ENCODE measurements at regions of chr2 and their contacts with region 1.

Region 1: DNA sequence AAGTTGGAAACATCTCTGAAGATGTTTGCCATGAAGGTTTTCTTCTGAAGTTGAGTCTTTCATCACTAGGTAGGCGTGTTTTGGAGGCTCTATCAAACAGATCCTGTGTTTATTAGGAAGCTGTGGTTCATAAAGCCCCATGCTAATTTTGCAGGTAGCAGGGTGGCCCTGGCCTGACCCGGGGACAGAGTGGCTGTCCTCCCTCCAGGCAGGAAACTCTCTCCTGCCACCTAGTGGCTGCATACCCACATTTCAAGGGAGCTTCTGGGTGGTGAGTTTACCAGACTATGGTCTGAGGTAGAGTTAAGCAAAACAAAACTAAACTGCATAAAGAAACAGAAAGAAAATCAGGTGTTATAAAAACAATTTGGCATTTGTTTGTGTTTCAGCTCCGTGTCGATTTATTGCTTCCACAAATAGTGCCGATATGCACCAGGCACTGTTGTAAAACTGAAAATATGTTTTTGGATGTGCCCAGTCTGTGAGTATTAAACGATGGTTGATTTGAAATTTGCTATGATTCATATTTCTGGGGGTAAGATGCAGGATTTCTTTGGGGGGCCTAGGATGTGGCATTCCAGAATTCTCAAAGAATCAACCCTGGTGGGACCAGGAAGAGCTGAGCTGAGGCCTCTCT is 26.0 kb upstream of the IL37 start:
- DNase-seq: peak; percentile 80
- CTCF ChIP-seq: peak; percentile 84

Region 2: DNA sequence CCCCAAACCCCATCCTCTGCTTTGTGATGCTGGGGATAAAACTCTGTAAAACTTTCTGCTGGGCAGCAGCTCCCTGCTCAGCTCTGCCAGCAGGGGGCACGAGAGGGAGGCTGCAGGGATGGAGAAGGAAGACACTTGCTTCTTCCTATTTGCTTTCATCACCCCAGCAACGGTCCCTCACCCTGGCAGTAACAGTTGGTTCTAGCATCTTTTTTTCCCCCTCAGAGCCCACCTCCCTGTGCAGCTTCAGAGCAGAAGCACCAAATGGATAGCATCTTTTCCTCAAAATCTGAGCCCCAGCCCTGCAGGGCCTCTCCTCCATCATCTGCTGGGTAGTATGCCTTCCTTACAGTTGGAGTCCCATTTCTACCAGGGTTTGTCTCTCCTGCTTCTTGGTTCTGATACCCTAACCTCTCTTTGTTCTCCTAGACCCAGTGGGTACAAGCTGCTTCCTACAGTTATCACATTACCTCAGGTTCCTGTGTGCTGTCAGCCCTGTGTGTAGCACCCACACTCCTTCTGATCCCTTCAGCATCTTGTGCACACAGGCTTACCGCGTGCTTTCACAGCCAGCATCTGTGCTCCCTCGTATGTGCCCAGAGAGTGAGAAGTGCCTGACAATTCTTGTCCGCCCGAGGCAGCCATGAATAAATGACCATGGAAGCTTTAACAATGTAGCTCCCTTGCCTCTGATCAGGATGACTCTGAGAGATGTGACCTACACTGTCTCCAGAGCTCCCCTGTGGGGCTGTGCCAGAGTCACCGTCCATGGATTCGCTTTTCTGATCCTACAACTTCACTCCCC is 135.0 kb before region 1 on chr2:
- in situ Hi-C with region 1: loop called (anchors 10 kb)
- DNase-seq: peak; percentile 66
- CTCF ChIP-seq: peak; percentile 97

Measured in GM13977 (cell line).